ENCODE measurements at regions of chr2 and their contacts with region 1.

Region 1: GRCh38 chr2:44479122-44479887 is 117.6 kb downstream of the CAMKMT start:
- DNase-seq: peak; percentile 49 to 73 (median 64)
- H3K4me3 ChIP-seq: no peak overlapping the region
- H3K4me3 Mint-ChIP-seq: no peak overlapping the region
- H3K27ac ChIP-seq: no peak overlapping the region
- H3K27ac Mint-ChIP-seq: peak overlapping the region in 1 of 7 donors; percentile 8
- H3K4me1 ChIP-seq: no peaks in the 10 kb centered on the region
- H3K4me1 Mint-ChIP-seq: peaks cover 4 to 8% (median 6%) of the 10 kb centered on the region in 4 donors
- H3K27me3 ChIP-seq: no peaks in the 10 kb centered on the region
- H3K27me3 Mint-ChIP-seq: no peaks in the 10 kb centered on the region

Region 2: DNA sequence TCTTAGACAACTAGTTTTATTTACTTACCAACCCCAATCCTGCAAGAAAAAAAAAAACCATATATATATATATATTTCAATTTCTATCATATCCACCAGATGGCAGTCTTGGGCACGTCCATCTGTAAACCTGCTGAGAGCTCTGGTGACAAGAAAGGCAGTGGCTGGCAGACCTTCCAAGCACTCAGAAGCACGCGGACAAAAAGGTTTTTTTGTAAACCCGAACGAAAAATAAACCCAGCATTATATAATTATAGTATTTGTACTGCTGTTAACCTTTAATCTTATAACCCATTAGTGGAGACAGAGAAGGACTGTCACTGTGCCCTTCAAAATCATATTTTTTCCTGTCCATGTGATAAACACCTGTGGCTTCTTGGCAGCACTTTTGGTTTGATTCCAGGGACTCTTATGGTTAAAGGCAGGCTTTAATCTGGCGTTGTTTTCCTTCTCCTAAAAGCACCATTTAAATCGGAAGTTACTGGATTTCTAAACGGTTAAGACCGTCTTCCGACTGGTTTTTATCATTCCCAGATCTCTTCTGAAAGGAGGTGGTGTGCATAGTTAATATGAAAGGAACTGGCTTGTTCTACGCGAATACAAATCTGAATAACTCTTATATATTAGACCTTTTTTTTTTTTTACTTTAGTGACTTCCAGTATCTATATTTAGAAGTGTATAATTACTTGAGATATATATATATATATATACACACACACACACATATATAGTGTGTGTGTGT is 235.0 kb before region 1 on chr2:
- CTCF ChIA-PET with region 1: interaction called, 3 read pairs
- POLR2A ChIA-PET with region 1: no interaction called
- intact Hi-C with region 1: loop called (anchors 1 kb)
- DNase-seq: peak; percentile 46 to 68 (median 66)
- H3K4me3 ChIP-seq: peak overlapping the region in 1 of 2 donors; percentile 58
- H3K4me3 Mint-ChIP-seq: peak overlapping the region; percentile 83 to 93 (median 86)
- H3K27ac ChIP-seq: no peak overlapping the region
- H3K27ac Mint-ChIP-seq: peak overlapping the region in 5 of 7 donors; percentile 58 to 88 (median 71)
- H3K4me1 ChIP-seq: peaks cover 10% of the 10 kb centered on the region
- H3K4me1 Mint-ChIP-seq: peaks cover 13 to 30% (median 23%) of the 10 kb centered on the region in 4 donors
- H3K27me3 ChIP-seq: no peaks in the 10 kb centered on the region
- H3K27me3 Mint-ChIP-seq: no peaks in the 10 kb centered on the region

Region 3: GRCh38 chr2:44433881-44434280 is 45.4 kb before region 1 on chr2:
- CTCF ChIA-PET with region 1: interaction called, 10 read pairs
- POLR2A ChIA-PET with region 1: no interaction called
- intact Hi-C with region 1: no loop called
- DNase-seq: no peak
- H3K4me3 ChIP-seq: no peak overlapping the region
- H3K4me3 Mint-ChIP-seq: no peak overlapping the region
- H3K27ac ChIP-seq: no peak overlapping the region
- H3K27ac Mint-ChIP-seq: peak overlapping the region in 1 of 7 donors; percentile 34
- H3K4me1 ChIP-seq: no peaks in the 10 kb centered on the region
- H3K4me1 Mint-ChIP-seq: peaks cover 0 to 10% (median 7%) of the 10 kb centered on the region in 4 donors
- H3K27me3 ChIP-seq: no peaks in the 10 kb centered on the region
- H3K27me3 Mint-ChIP-seq: no peaks in the 10 kb centered on the region

Region 4: DNA sequence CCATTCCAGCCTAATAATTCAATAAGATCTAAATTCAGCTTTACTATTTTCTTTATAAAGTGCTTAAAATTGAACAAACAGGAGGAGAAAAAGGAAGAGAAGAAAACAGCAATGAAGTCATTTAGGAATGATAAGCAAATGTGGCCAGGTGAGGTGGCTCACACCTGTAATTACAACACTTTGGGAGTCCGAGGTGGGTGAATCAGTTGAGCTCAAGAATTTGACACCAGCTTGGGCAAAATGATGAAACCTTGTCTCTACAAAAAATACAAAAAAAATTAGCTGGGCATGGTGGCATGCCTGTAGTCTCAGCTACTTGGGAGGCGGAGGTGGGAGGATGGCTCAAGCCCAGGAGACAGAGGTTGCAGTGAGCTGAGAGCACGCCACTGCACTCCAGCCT is 11.4 kb after region 1 on chr2:
- CTCF ChIA-PET with region 1: interaction called, 13 read pairs
- POLR2A ChIA-PET with region 1: no interaction called
- intact Hi-C with region 1: no loop called
- DNase-seq: no peak
- H3K4me3 ChIP-seq: no peak overlapping the region
- H3K4me3 Mint-ChIP-seq: no peak overlapping the region
- H3K27ac ChIP-seq: no peak overlapping the region
- H3K27ac Mint-ChIP-seq: no peak overlapping the region
- H3K4me1 ChIP-seq: no peaks in the 10 kb centered on the region
- H3K4me1 Mint-ChIP-seq: no peaks in the 10 kb centered on the region
- H3K27me3 ChIP-seq: no peaks in the 10 kb centered on the region
- H3K27me3 Mint-ChIP-seq: no peaks in the 10 kb centered on the region

Region 5: DNA sequence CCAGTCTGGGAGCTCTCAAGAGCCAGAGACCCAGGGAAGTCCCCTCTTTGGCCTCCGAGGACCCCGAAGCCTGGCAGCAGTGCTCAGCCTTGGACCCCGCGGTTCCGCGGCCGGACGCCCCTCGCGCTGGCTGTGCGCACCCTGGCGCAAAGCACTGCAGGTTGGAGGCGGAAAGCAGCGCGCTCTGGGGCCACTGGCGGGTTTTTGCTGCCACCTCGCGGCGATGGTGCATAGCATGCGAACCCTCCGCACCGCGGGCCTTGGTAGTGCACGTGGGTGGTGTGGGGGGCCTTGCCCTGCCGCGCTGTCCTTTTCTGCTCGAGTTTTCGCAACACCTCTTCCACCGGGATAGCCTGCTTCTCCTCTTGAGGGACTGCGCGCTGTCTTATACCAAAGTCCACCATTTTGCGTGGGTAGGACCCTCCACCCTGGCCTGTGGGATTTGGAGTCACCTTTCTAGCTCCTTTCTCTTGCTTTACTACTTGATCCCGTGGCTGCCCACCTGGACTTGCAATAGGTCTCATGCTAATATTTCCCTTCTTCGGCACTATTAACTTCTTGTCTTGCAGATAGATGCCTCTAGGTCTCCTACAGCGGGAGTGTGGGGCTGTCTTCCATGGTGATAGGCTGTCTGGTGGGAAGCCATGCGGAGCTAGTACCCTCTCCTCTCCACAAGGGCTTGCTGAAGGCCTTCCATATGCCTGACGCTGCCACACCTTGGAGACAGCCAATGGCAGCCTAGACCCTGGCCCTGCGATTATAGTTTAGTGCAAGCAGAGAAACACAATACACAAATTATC is 476.5 kb after region 1 on chr2:
- CTCF ChIA-PET with region 1: interaction called, 19 read pairs
- POLR2A ChIA-PET with region 1: no interaction called
- intact Hi-C with region 1: loop called (anchors 1 kb)
- DNase-seq: peak; percentile 51 to 58 (median 57)
- H3K4me3 ChIP-seq: no peak overlapping the region
- H3K4me3 Mint-ChIP-seq: peak overlapping the region in 2 of 8 donors; percentile 6 to 76
- H3K27ac ChIP-seq: no peak overlapping the region
- H3K27ac Mint-ChIP-seq: no peak overlapping the region
- H3K4me1 ChIP-seq: peaks cover 13% of the 10 kb centered on the region
- H3K4me1 Mint-ChIP-seq: peaks cover 11 to 36% (median 24%) of the 10 kb centered on the region in 4 donors
- H3K27me3 ChIP-seq: peaks cover 9% of the 10 kb centered on the region
- H3K27me3 Mint-ChIP-seq: peaks cover 30 to 57% of the 10 kb centered on the region in 2 donors

Region 6: GRCh38 chr2:45009303-45009927 is 530.1 kb after region 1 on chr2 and contains the start of gene SIX2:
- CTCF ChIA-PET with region 1: no interaction called
- POLR2A ChIA-PET with region 1: no interaction called
- intact Hi-C with region 1: no loop called
- DNase-seq: no peak
- H3K4me3 ChIP-seq: no peak within 1 kb of the TSS
- H3K4me3 Mint-ChIP-seq: peak within 1 kb of the TSS; percentile 51 to 86 (median 75)
- H3K27ac ChIP-seq: no peak within 1 kb of the TSS
- H3K27ac Mint-ChIP-seq: no peak within 1 kb of the TSS
- H3K4me1 ChIP-seq: peaks cover 5% of the 10 kb centered on the region
- H3K4me1 Mint-ChIP-seq: peaks cover 9 to 50% (median 26%) of the 10 kb centered on the region in 4 donors
- H3K27me3 ChIP-seq: peaks cover 13% of the 10 kb centered on the region
- H3K27me3 Mint-ChIP-seq: peaks cover 48 to 54% of the 10 kb centered on the region in 2 donors
- total RNA-seq, gene SIX2: not detected